ENCODE measurements at regions of chr5 and their contacts with region 1.

Region 1: GRCh38 chr5:115586601-115587048 is 15.7 kb downstream of the TICAM2 start:
- DNase-seq: no peak
- H3K4me3 ChIP-seq: no peak overlapping the region
- H3K27ac ChIP-seq: no peak overlapping the region
- H3K4me1 ChIP-seq: no peaks in the 10 kb centered on the region
- H3K27me3 ChIP-seq: no peaks in the 10 kb centered on the region
- CTCF ChIP-seq: peak; percentile 28 to 60 (median 43)
- POLR2A ChIP-seq: no peak

Region 2: GRCh38 chr5:115132465-115132864 is 454.2 kb before region 1 on chr5:
- intact Hi-C with region 1: no loop called
- DNase-seq: no peak
- H3K4me3 ChIP-seq: no peak overlapping the region
- H3K27ac ChIP-seq: no peak overlapping the region
- H3K4me1 ChIP-seq: no peaks in the 10 kb centered on the region
- H3K27me3 ChIP-seq: no peaks in the 10 kb centered on the region
- CTCF ChIP-seq: no peak
- POLR2A ChIP-seq: no peak

Region 3: GRCh38 chr5:115309751-115310370 is 276.8 kb before region 1 on chr5:
- intact Hi-C with region 1: loop called (anchors 5 kb)
- DNase-seq: no peak
- H3K4me3 ChIP-seq: no peak overlapping the region
- H3K27ac ChIP-seq: no peak overlapping the region
- H3K4me1 ChIP-seq: no peaks in the 10 kb centered on the region
- H3K27me3 ChIP-seq: no peaks in the 10 kb centered on the region
- CTCF ChIP-seq: peak; percentile 35 to 68 (median 50)
- POLR2A ChIP-seq: no peak